ENCODE measurements at regions of chr10 and their contacts with region 1.

Region 1: DNA sequence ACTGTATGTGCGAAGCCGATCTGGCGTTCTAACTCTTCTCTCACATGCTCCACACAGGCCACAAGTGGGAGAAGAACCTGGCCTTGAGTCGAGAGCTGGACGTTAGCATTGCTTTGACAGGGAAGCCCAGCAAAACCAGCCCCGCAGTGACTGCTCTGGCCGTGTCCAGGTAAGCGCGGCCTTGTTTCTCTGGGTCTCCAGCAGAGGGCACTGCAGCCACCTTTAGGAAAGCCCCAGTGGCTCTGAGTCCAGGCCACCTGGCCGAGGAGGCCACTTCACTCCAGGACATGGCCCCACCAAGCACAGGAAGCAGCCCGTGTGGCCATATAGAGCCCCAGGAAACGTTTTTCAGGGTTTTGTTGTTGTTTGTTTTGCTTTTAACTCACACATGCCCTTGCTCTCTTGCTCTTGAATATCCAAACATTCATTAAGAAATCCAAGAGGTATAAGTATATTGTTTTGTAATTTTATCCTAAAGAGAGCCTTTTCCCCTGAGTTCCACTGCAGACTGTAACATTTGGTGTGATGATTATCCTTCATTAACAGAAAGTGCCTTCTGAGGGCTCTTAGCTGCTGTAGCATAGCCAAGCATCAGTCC is 41.8 kb upstream of the LRRC18 start:
- DNase-seq: peak; percentile 19
- H3K4me3 Mint-ChIP-seq: no peak overlapping the region
- H3K27ac Mint-ChIP-seq: no peak overlapping the region
- H3K4me1 Mint-ChIP-seq: no peaks in the 10 kb centered on the region
- H3K27me3 Mint-ChIP-seq: peaks cover 2% of the 10 kb centered on the region

Region 2: GRCh38 chr10:49164559-49165188 is 183.3 kb after region 1 on chr10:
- intact Hi-C with region 1: loop called (anchors 1 kb)
- DNase-seq: peak; percentile 31
- H3K4me3 Mint-ChIP-seq: no peak overlapping the region
- H3K27ac Mint-ChIP-seq: peak overlapping the region; percentile 25
- H3K4me1 Mint-ChIP-seq: peaks cover 33% of the 10 kb centered on the region
- H3K27me3 Mint-ChIP-seq: no peaks in the 10 kb centered on the region

Region 3: DNA sequence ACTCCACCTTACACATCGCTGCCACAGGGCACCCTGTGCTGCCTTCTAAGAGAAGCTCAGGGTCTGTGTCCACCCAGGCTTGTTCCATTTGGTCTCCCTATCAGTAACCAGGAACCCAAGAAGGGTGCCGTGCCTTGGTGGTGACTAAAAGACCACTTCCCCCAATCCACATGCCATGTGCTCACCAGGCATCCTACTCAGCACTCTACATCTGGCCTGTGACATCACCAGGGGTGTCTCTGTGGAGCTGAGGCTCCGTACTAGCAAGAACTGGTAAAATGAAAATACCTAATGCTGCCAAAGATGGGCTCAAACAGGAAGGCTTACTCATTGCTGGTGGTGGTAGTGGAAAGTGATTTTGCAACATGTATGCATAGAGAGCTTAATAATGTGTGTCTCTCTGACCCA is 298.6 kb after region 1 on chr10:
- intact Hi-C with region 1: loop called (anchors 10 kb)
- DNase-seq: no peak
- H3K4me3 Mint-ChIP-seq: no peak overlapping the region
- H3K27ac Mint-ChIP-seq: no peak overlapping the region
- H3K4me1 Mint-ChIP-seq: peaks cover 5% of the 10 kb centered on the region
- H3K27me3 Mint-ChIP-seq: no peaks in the 10 kb centered on the region

Region 4: DNA sequence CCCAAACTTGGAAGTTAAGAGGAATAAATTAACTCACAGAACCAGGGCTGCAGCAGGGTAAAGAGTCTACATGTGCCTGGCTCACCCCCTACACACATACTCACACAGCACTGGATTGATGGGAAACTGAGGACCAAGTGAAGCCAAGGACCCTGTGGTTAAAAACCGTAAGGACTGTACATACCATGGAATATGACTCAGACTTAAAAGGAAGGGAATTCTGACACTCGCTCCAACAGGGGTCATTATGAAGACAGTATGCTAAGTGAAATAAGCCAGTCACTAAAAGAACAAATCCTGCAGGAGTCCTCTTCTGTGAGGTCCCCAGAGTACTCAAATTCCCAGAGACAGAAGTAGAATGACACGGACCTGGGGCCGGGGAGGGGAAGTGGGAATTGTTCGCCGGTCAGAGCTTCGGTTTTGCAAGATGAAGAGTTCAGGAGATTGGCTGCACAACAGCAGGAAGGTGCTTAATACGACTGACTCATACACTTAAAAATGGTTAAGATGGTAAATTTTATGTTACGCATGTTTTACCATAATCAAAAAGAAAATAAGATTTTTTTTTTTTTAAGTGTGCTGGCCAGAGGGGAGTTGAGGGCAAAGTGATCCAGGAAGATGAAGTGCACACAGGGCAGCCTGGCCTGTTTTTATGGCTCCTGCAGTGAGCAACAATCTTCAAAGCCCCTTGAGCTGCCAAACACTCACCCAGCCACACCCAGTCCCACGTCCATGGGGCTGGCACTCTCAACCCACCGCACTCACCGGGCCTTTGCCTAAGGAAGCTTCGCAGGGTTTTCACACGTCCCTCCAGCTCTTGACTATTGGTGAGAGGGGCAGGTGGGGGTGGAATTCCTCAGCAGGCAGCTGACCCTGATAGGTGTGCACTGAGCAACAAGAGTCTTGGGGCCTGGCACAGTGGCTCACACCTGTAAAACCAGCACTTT is 388.1 kb after region 1 on chr10:
- intact Hi-C with region 1: loop called (anchors 5 kb)
- DNase-seq: no peak
- H3K4me3 Mint-ChIP-seq: no peak overlapping the region
- H3K27ac Mint-ChIP-seq: no peak overlapping the region
- H3K4me1 Mint-ChIP-seq: no peaks in the 10 kb centered on the region
- H3K27me3 Mint-ChIP-seq: peaks cover 5% of the 10 kb centered on the region

Region 5: GRCh38 chr10:49512121-49512809 is 530.9 kb after region 1 on chr10:
- intact Hi-C with region 1: loop called (anchors 1 kb)
- DNase-seq: no peak
- H3K4me3 Mint-ChIP-seq: no peak overlapping the region
- H3K27ac Mint-ChIP-seq: no peak overlapping the region
- H3K4me1 Mint-ChIP-seq: peaks cover 18% of the 10 kb centered on the region
- H3K27me3 Mint-ChIP-seq: peaks cover 6% of the 10 kb centered on the region

Region 6: GRCh38 chr10:49518982-49519578 is 537.7 kb after region 1 on chr10:
- intact Hi-C with region 1: loop called (anchors 2 kb)
- DNase-seq: no peak
- H3K4me3 Mint-ChIP-seq: no peak overlapping the region
- H3K27ac Mint-ChIP-seq: no peak overlapping the region
- H3K4me1 Mint-ChIP-seq: no peaks in the 10 kb centered on the region
- H3K27me3 Mint-ChIP-seq: no peaks in the 10 kb centered on the region